ENCODE measurements at regions of chr12 and their contacts with region 1.

Region 1: DNA sequence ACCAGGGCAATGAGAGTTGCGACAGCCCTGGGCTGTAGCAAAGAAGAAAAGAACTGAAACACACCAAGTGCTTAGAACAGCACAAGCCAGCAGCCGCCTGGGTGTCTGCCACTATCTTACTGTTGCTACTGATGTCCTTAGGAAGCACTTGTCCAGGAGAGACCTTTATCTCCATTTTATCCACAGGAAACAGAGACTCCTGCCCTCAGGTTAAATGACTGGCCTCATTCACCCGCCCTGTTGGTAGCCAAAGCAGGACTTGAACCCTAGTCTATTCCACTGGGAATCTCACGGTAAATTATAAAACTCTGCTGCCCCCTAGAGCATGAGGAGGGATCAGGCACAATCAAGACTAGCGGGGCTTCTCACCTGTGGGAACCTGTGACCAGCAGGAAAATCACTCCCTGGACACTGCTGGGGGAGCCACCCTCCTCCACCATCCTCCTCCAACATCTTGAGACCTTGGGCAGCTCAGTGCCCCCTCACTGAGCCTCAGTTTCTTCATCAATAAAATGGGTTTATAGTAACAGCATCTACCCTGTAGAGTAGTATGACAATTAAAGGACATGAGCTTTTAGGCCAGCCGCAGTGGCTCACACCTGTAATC is 20.5 kb upstream of the TESC start:
- DNase-seq: peak in 1 of 2 donors; percentile 64
- ATAC-seq: peak in 2 of 3 donors; percentile 52 to 82
- H3K4me3 ChIP-seq: no peak overlapping the region
- H3K4me3 Mint-ChIP-seq: no peak overlapping the region
- H3K27ac ChIP-seq: no peak overlapping the region
- H3K27ac Mint-ChIP-seq: no peak overlapping the region
- H3K4me1 ChIP-seq: peaks cover 7% of the 10 kb centered on the region
- H3K4me1 Mint-ChIP-seq: peaks cover 0 to 7% of the 10 kb centered on the region in 2 donors
- H3K27me3 ChIP-seq: no peaks in the 10 kb centered on the region
- H3K27me3 Mint-ChIP-seq: no peaks in the 10 kb centered on the region
- CTCF ChIP-seq: peak; percentile 82

Region 2: DNA sequence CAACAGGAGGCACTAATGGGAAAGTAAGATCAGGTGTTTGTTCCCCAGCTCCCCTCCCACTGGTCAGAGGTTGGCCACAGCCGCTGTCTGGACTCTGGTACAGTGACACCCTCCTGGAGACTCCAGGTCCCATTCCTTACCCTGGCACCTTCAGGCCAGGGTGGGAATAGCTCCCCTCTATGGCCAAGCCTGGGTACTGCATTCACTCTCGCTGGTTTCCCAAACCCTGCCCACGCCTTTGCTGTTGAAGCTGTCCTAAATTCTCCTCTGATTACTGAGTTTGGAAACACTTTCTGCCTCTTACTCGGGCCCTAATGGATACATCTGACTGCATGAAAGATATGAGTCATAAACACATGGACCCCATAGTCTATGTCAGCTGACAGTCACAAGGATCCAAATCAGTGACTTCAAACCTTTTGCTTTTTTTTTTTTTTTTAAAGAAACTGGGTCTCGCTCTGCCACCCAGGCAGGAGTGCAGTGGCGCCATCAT is 256.4 kb before region 1 on chr12:
- intact Hi-C with region 1: no loop called
- DNase-seq: peak in 1 of 2 donors; percentile 21
- ATAC-seq: peak in 1 of 3 donors; percentile 40
- H3K4me3 ChIP-seq: no peak overlapping the region
- H3K4me3 Mint-ChIP-seq: no peak overlapping the region
- H3K27ac ChIP-seq: no peak overlapping the region
- H3K27ac Mint-ChIP-seq: no peak overlapping the region
- H3K4me1 ChIP-seq: no peaks in the 10 kb centered on the region
- H3K4me1 Mint-ChIP-seq: no peaks in the 10 kb centered on the region
- H3K27me3 ChIP-seq: no peaks in the 10 kb centered on the region
- H3K27me3 Mint-ChIP-seq: peaks cover 18 to 28% of the 10 kb centered on the region in 2 donors
- CTCF ChIP-seq: peak; percentile 26

Region 3: GRCh38 chr12:117025481-117026151 is 94.1 kb before region 1 on chr12:
- intact Hi-C with region 1: loop called (anchors 1 kb)
- DNase-seq: peak; percentile 46 to 71
- ATAC-seq: peak; percentile 78 to 93 (median 91)
- H3K4me3 ChIP-seq: no peak overlapping the region
- H3K4me3 Mint-ChIP-seq: no peak overlapping the region
- H3K27ac ChIP-seq: no peak overlapping the region
- H3K27ac Mint-ChIP-seq: peak overlapping the region in 1 of 2 donors; percentile 18
- H3K4me1 ChIP-seq: peaks cover 8% of the 10 kb centered on the region
- H3K4me1 Mint-ChIP-seq: peaks cover 10% of the 10 kb centered on the region in 2 donors
- H3K27me3 ChIP-seq: no peaks in the 10 kb centered on the region
- H3K27me3 Mint-ChIP-seq: no peaks in the 10 kb centered on the region
- CTCF ChIP-seq: peak; percentile 93